Activated CD4-positive, alpha-beta T cell treated with anti-CD3 and anti-CD28 coated beads for 36 hours (primary cell): ENCODE measurements at regions of chr12 and their contacts with region 1.

Region 1: GRCh38 chr12:101919447-101919846 is 42.1 kb downstream of the DRAM1 start:
- DNase-seq: no peak
- ATAC-seq: no peak
- H3K4me3 Mint-ChIP-seq: no peak overlapping the region
- H3K27ac Mint-ChIP-seq: no peak overlapping the region
- H3K4me1 Mint-ChIP-seq: peaks cover 2% of the 10 kb centered on the region
- H3K27me3 Mint-ChIP-seq: peaks cover 6% of the 10 kb centered on the region

Region 2: DNA sequence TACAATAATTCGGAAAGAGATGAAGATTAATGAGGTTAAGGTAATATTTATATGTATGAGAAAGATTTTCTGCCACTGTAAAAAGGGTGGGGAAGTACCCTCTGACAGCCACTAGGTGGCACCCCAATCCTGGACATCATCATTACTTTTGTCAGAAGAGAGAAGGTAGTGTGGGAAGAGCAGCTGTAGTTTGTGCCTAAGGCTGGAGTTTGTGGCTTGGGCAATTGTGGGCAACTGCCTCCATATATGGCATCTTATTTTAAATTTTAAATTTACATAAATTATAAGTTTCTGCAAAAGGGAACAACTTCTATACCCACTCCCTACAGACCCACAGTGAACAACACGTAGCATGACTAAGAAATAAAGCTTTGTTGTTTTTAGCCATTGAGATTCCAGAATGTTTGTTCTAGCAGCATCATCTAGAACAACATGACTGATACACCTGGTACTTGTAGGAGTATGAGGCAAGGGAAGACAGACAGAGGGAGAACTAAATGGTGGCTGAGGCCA is 145.7 kb before region 1 on chr12:
- CTCF ChIA-PET with region 1: no interaction called
- POLR2A ChIA-PET with region 1: no interaction called
- intact Hi-C with region 1: loop called in 1 of 2 experiments (anchors 1 kb)
- DNase-seq: peak; percentile 78
- ATAC-seq: peak; percentile 87
- H3K4me3 Mint-ChIP-seq: no peak overlapping the region
- H3K27ac Mint-ChIP-seq: peak overlapping the region; percentile 65
- H3K4me1 Mint-ChIP-seq: peaks cover 9% of the 10 kb centered on the region
- H3K27me3 Mint-ChIP-seq: no peaks in the 10 kb centered on the region

Region 3: GRCh38 chr12:102769319-102769916 is 850.0 kb after region 1 on chr12:
- CTCF ChIA-PET with region 1: no interaction called
- POLR2A ChIA-PET with region 1: no interaction called
- intact Hi-C with region 1: loop called in 1 of 2 experiments (anchors 2 kb)
- DNase-seq: peak; percentile 57
- ATAC-seq: peak; percentile 60
- H3K4me3 Mint-ChIP-seq: no peak overlapping the region
- H3K27ac Mint-ChIP-seq: no peak overlapping the region
- H3K4me1 Mint-ChIP-seq: no peaks in the 10 kb centered on the region
- H3K27me3 Mint-ChIP-seq: peaks cover 3% of the 10 kb centered on the region